T-cell (primary cell): ENCODE measurements at regions of chr15 and their contacts with region 1.

Region 1: GRCh38 chr15:57333487-57333886 is 42.8 kb upstream of the CGNL1 start:
- DNase-seq: no peak
- ATAC-seq: no peak
- H3K4me3 ChIP-seq: no peak overlapping the region
- H3K4me3 Mint-ChIP-seq: no peak overlapping the region
- H3K27ac ChIP-seq: no peak overlapping the region
- H3K27ac Mint-ChIP-seq: no peak overlapping the region
- H3K4me1 ChIP-seq: peaks cover 0 to 3% of the 10 kb centered on the region in 2 experiments
- H3K4me1 Mint-ChIP-seq: no peaks in the 10 kb centered on the region
- H3K27me3 ChIP-seq: peaks cover 0 to 50% of the 10 kb centered on the region in 2 experiments
- H3K27me3 Mint-ChIP-seq: peaks cover 20 to 56% of the 10 kb centered on the region in 2 donors

Region 2: GRCh38 chr15:57235873-57236272 is 97.6 kb before region 1 on chr15:
- CTCF ChIA-PET with region 1: interaction called in 1 of 2 experiments, 12 read pairs
- POLR2A ChIA-PET with region 1: no interaction called
- DNase-seq: no peak
- ATAC-seq: no peak
- H3K4me3 ChIP-seq: no peak overlapping the region
- H3K4me3 Mint-ChIP-seq: no peak overlapping the region
- H3K27ac ChIP-seq: no peak overlapping the region
- H3K27ac Mint-ChIP-seq: no peak overlapping the region
- H3K4me1 ChIP-seq: no peaks in the 10 kb centered on the region
- H3K4me1 Mint-ChIP-seq: peaks cover 0 to 6% (median 0%) of the 10 kb centered on the region in 3 donors
- H3K27me3 ChIP-seq: no peaks in the 10 kb centered on the region
- H3K27me3 Mint-ChIP-seq: no peaks in the 10 kb centered on the region